AG04449 (cell line): ENCODE measurements at regions of chr1 and their contacts with region 1.

Region 1: DNA sequence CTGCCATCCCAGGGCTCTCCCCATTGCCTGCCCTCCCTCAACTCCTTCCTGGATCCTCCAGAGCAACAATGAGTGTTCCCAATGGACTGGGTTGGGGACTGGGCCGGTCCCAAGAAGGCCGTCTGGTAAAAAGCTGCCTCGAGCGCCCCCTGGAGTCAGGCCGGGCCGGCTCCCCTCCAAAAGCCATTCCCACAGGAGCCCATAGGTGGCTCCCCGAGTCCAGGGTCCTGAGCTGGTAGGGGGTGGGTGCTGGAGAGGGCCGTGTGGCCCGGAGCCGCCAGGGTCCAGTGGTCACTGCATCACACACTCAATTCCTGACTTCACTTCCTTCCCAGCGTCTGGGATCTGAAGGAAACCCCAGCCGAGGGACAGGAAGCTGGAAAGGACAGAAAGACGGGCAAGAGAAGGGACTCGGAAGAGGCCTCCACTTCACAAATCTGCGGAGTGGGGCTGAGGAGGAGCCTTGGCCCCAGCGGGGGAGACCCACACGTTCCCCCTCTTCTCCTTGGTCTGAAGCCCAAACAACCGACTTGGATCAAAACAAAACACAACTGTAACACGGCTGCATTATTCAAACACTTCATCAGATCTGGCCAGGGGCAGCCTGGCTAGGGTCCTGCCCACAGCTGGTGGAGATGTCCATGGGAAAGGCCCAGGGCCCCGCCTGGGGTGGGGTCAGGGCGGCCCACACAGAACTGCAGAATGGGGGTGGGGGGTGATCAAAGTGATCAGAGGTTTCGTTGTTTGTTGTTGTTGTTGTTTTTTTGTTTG is 10.9 kb upstream of the ALDH4A1 start:
- DNase-seq: no peak
- H3K4me3 ChIP-seq: no peak overlapping the region
- CTCF ChIP-seq: peak; percentile 100

Region 2: GRCh38 chr1:18047122-18047521 is 866.1 kb before region 1 on chr1:
- CTCF ChIA-PET with region 1: no interaction called
- POLR2A ChIA-PET with region 1: no interaction called
- DNase-seq: no peak
- H3K4me3 ChIP-seq: no peak overlapping the region
- CTCF ChIP-seq: no peak

Region 3: GRCh38 chr1:18707696-18708257 is 205.5 kb before region 1 on chr1:
- CTCF ChIA-PET with region 1: no interaction called
- POLR2A ChIA-PET with region 1: no interaction called
- DNase-seq: no peak
- H3K4me3 ChIP-seq: no peak overlapping the region
- CTCF ChIP-seq: no peak

Region 4: GRCh38 chr1:18883636-18884418 is 29.4 kb before region 1 on chr1:
- CTCF ChIA-PET with region 1: interaction called, 15 read pairs
- POLR2A ChIA-PET with region 1: no interaction called
- DNase-seq: no peak
- H3K4me3 ChIP-seq: no peak overlapping the region
- CTCF ChIP-seq: peak; percentile 97

Region 5: GRCh38 chr1:18941221-18942141 is 28.2 kb after region 1 on chr1:
- CTCF ChIA-PET with region 1: interaction called, 56 read pairs
- POLR2A ChIA-PET with region 1: no interaction called
- DNase-seq: no peak
- H3K4me3 ChIP-seq: no peak overlapping the region
- CTCF ChIP-seq: no peak

Region 6: GRCh38 chr1:18972531-18972930 is 59.3 kb after region 1 on chr1:
- CTCF ChIA-PET with region 1: interaction called, 94 read pairs
- POLR2A ChIA-PET with region 1: no interaction called
- DNase-seq: no peak
- H3K4me3 ChIP-seq: no peak overlapping the region
- CTCF ChIP-seq: no peak

Region 7: GRCh38 chr1:19024532-19024931 is 111.3 kb after region 1 on chr1:
- CTCF ChIA-PET with region 1: interaction called, 13 read pairs
- POLR2A ChIA-PET with region 1: no interaction called
- DNase-seq: no peak
- H3K4me3 ChIP-seq: no peak overlapping the region
- CTCF ChIP-seq: no peak

Region 8: DNA sequence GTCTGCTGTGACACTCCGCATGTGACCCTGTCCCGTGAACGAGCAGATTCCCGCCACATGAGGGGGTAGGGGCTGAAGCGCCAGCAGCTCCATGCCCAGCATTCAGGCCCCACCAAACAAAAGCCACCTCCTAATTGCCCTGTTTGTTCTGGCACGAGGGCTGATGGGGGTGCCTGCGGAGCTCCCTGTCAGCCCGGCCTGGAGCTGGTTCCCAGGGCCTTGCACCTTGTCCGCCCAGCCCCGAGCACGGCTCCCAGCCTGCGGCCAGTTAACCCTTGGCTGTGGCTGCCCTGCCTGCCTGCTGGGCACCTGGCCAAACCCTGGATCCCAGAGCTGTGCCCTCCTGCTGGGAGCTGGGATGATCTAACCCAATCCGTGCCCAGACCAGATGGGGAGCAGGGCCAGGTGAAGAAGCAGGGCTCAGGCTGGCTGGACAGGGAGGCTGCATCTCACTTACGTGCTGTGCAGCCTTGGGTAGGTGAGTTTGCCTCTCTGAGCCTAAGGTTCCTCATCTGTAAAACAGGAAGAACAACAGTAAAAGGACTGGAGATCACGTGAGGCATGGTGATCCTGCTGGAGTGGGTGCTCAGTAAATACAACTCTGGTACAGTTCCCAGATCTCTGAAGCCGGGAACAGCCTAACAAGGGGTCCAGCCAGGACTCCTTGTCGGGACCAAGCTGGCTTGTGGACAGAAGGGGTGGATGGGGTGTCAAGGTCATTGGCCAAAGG is 154.1 kb after region 1 on chr1:
- CTCF ChIA-PET with region 1: interaction called, 86 read pairs
- POLR2A ChIA-PET with region 1: no interaction called
- DNase-seq: no peak
- H3K4me3 ChIP-seq: no peak overlapping the region
- CTCF ChIP-seq: no peak

Region 9: GRCh38 chr1:19096036-19096833 is 183.0 kb after region 1 on chr1:
- CTCF ChIA-PET with region 1: interaction called, 117 read pairs
- POLR2A ChIA-PET with region 1: no interaction called
- DNase-seq: no peak
- H3K4me3 ChIP-seq: no peak overlapping the region
- CTCF ChIP-seq: peak; percentile 35